Activated CD4-positive, alpha-beta T cell treated with anti-CD3 and anti-CD28 coated beads, Interleukin-2, amount 10 ng/mL, durations not matched to agents 24 days and 14 days (primary cell): ENCODE measurements at regions of chr1 and their contacts with region 1.

Region 1: DNA sequence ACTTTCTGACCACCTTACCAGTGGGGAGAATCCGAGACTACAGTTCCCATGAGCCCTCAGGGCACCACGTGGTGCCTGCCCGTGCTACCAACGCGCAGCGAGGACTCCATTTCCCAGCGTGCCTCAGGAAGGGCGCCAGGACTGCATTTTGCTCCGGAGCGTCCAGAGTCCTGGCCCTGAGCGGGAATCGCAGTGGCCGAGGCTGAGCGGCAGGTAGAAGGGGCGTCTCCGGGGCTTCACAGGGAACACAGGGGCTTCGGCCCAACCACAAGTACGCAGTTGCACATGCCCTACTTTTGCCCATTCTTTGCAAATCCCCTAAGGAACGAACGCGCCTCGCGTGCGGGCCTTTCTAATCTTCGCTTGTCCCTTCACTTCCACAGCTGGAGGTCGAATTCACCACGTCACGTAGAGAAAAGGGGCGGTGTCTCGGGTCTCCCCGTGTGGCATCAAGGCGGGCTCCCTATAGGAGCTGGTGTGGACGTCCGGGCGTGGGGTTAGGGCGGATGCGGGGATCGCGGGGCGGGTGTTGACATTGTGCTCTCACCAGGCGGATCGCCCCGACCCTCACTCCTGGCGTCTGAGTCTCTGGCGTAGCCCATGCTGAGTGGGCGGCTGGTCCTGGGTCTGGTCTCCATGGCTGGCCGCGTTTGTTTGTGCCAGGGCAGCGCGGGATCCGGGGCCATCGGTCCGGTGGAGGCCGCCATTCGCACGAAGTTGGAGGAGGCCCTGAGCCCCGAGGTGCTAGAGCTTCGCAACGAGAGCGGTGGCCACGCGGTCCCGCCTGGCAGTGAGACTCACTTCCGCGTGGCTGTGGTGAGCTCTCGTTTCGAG is at the start of gene BOLA1:
- DNase-seq: peak; percentile 95
- H3K4me3 Mint-ChIP-seq: peak within 1 kb of the TSS; percentile 87
- H3K27ac Mint-ChIP-seq: peak within 1 kb of the TSS; percentile 94
- H3K4me1 Mint-ChIP-seq: peaks cover 21% of the 10 kb centered on the region
- H3K27me3 Mint-ChIP-seq: no peaks in the 10 kb centered on the region
- total RNA-seq, gene BOLA1: 25.8 and 26.6 TPM in 2 replicates

Region 2: GRCh38 chr1:149927503-149928387 is 28.1 kb after region 1 on chr1 and contains the start of gene SF3B4:
- intact Hi-C with region 1: loop called (anchors 1 kb)
- DNase-seq: peak; percentile 99
- H3K4me3 Mint-ChIP-seq: peak within 1 kb of the TSS; percentile 97
- H3K27ac Mint-ChIP-seq: peak within 1 kb of the TSS; percentile 94
- H3K4me1 Mint-ChIP-seq: peaks cover 62% of the 10 kb centered on the region
- H3K27me3 Mint-ChIP-seq: no peaks in the 10 kb centered on the region
- total RNA-seq, gene SF3B4: 124 and 131 TPM in 2 replicates

Region 3: GRCh38 chr1:149942207-149942606 is 42.5 kb after region 1 on chr1:
- intact Hi-C with region 1: no loop called
- DNase-seq: no peak
- H3K4me3 Mint-ChIP-seq: no peak overlapping the region
- H3K27ac Mint-ChIP-seq: no peak overlapping the region
- H3K4me1 Mint-ChIP-seq: peaks cover 31% of the 10 kb centered on the region
- H3K27me3 Mint-ChIP-seq: no peaks in the 10 kb centered on the region

Region 4: GRCh38 chr1:150162862-150163706 is 263.4 kb after region 1 on chr1:
- intact Hi-C with region 1: loop called (anchors 10 kb)
- DNase-seq: peak; percentile 70
- H3K4me3 Mint-ChIP-seq: peak overlapping the region; percentile 3
- H3K27ac Mint-ChIP-seq: no peak overlapping the region
- H3K4me1 Mint-ChIP-seq: peaks cover 42% of the 10 kb centered on the region
- H3K27me3 Mint-ChIP-seq: peaks cover 4% of the 10 kb centered on the region